AG04449 (cell line): ENCODE measurements at regions of chr1 and their contacts with region 1.

Region 1: DNA sequence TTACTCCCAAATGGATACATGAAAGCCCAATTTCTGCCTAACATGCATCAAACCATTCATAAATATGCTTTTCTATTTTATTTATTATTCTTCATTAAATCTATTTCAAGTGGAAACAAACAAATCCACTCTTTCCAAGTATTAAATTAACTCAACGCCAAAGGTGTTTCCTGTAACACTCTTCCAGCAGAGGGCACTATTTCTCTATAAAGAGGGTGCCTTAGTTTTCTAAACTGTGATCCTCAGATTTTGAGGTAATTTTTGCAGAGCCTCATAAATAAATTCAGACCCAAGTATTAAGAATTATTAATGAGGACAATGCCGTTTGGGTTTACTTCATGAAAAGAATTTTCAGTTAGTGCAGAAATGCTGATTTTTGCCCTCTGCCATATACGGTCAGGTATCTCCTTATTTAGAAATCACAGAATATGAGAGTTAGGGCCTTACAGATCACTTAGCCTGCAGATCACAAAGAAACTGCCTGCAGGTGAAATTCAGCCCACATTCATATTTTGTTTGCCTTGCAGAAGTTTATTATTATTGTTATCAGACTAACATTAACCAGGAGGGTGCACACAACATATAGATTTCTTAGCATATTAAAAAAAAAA is 40.1 kb upstream of the MYSM1 start:
- DNase-seq: no peak
- H3K4me3 ChIP-seq: no peak overlapping the region
- CTCF ChIP-seq: peak; percentile 32

Region 2: DNA sequence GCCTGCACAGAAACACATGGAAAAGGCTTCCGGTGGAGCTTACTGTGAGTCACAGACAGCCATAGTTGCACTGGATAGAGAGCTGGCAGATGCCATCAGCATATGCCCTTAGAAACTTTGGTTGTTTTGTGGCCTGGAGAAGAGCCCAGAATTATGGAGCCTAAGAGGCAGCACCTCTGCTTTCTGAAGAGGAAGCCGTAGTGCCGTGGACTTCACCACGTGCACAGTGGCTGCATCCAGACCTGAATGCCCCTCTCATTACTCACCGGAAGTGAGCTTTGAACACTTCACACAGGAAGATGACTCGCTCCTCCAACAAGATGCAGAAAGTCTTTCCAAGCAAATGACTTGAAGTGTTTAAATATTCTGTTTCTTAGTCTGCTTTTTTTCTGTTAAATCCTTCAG is 15.5 kb after region 1 on chr1:
- CTCF ChIA-PET with region 1: interaction called, 57 read pairs
- POLR2A ChIA-PET with region 1: interaction called, 3 read pairs
- DNase-seq: peak; percentile 98
- H3K4me3 ChIP-seq: no peak overlapping the region
- CTCF ChIP-seq: no peak

Region 3: GRCh38 chr1:58816072-58816746 is 76.2 kb after region 1 on chr1:
- CTCF ChIA-PET with region 1: no interaction called
- POLR2A ChIA-PET with region 1: no interaction called
- DNase-seq: no peak
- H3K4me3 ChIP-seq: peak overlapping the region; percentile 58
- CTCF ChIP-seq: no peak